Breast epithelium (tissue), 4 donors: ENCODE measurements at regions of chr20 and their contacts with region 1.

Region 1: GRCh38 chr20:1894951-1895673 is at the start of gene SIRPA:
- DNase-seq: peak in 1 of 2 donors; percentile 63
- H3K4me3 ChIP-seq: peak within 1 kb of the TSS; percentile 82 to 88 (median 85)
- H3K27ac ChIP-seq: peak within 1 kb of the TSS; percentile 93 to 99
- H3K4me1 ChIP-seq: peaks cover 0 to 18% of the 10 kb centered on the region in 2 donors
- H3K27me3 ChIP-seq: no peaks in the 10 kb centered on the region
- CTCF ChIP-seq: no peak
- POLR2A ChIP-seq: peak; percentile 27
- total RNA-seq, gene SIRPA: 42.3 to 64.6 (median 53.9) TPM

Region 2: DNA sequence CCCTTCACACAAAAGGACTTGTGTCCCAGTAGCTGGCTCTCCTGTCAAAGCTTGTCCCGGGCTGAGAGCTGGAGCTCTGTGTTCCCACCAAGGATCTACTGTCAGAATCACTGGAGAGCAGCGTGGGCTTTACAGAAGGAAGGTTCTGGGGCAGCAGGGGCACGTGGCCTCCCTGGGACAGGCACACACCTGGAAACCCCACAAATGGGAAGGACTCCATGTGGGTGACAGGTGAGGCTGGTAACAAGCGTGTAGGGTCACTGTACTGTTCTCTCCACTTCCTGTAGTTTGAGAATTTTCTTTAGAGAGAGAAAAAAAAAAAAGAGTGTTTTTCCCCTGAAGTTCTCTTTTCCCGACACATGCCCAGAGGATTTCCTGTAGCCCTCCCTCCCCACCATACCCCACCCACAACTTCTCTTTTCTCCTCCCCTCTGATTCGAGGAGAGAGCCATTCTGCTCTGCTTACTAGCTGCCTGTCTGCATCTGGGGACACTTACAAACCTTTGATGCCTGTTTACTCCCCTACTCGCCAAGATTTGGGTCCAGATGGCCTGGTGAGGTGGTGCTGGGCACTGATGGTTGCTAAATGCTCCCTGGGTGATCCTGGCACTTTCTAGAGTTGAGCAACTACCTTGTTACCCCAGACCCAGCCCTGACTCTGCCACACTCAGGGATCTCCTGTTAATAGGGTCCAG is 84.0 kb before region 1 on chr20:
- intact Hi-C with region 1: loop called (anchors 5 kb)
- DNase-seq: peak in 1 of 2 donors; percentile 92
- H3K4me3 ChIP-seq: peak overlapping the region in 1 of 3 donors; percentile 5
- H3K27ac ChIP-seq: peak overlapping the region; percentile 95 to 96
- H3K4me1 ChIP-seq: peaks cover 14 to 22% of the 10 kb centered on the region in 2 donors
- H3K27me3 ChIP-seq: no peaks in the 10 kb centered on the region
- CTCF ChIP-seq: no peak
- POLR2A ChIP-seq: no peak

Region 3: GRCh38 chr20:1918491-1919165 is 23.5 kb after region 1 on chr20:
- intact Hi-C with region 1: loop called (anchors 1 kb)
- DNase-seq: no peak
- H3K4me3 ChIP-seq: no peak overlapping the region
- H3K27ac ChIP-seq: no peak overlapping the region
- H3K4me1 ChIP-seq: no peaks in the 10 kb centered on the region
- H3K27me3 ChIP-seq: no peaks in the 10 kb centered on the region
- CTCF ChIP-seq: no peak
- POLR2A ChIP-seq: no peak